ENCODE measurements at regions of chr5 and their contacts with region 1.

Region 1: GRCh38 chr5:140372971-140373487 is 13.0 kb downstream of the SLC4A9 start:
- H3K4me3 ChIP-seq: no peak overlapping the region
- H3K27ac ChIP-seq: no peak overlapping the region
- H3K4me1 ChIP-seq: no peaks in the 10 kb centered on the region
- CTCF ChIP-seq: peak; percentile 80

Region 2: DNA sequence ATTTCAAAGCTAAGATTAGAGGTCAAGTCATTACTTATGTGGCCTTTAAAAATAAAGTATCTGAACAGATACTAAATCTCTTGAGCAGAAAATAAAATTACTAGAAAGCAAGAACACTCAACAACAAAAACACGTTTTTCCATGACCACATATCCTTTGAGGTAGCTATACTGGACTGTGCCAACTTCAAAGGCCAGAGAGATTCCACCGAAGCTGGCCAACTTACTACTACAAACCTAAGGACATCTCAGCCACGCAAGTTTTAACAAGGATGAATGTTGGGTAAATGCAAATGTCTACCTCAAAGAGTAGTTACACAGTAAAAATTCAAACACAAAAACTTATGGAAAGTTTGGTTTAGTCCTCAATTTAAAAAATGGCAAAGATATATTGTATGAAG is 89.0 kb before region 1 on chr5:
- CTCF ChIA-PET with region 1: no interaction called
- POLR2A ChIA-PET with region 1: no interaction called
- H3K4me3 ChIP-seq: no peak overlapping the region
- H3K27ac ChIP-seq: no peak overlapping the region
- H3K4me1 ChIP-seq: 0 out of 2 replicates have a peak, but pooled peaks cover 2% of the 10 kb centered on the region
- CTCF ChIP-seq: no peak

Region 3: DNA sequence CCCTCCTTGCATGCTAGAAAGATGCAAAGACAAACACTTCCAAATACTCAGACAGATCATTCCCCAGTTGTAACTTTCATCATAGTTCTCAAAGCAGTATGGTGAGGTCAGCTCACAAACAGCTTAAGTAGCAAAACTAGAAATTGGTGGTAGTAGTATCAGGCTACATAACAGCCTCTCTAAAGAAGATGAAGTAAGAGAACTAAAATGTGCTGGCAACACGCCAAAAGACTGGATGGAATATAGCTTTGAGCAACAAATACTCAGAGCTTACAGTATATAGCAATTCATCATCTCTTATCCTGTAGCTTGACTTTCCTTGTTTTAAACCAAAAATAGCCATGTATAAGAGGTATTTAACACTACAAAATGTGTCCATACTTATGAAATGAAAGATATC is 77.6 kb before region 1 on chr5:
- CTCF ChIA-PET with region 1: no interaction called
- POLR2A ChIA-PET with region 1: no interaction called
- H3K4me3 ChIP-seq: no peak overlapping the region
- H3K27ac ChIP-seq: no peak overlapping the region
- H3K4me1 ChIP-seq: peaks cover 47% of the 10 kb centered on the region
- CTCF ChIP-seq: no peak

Region 4: GRCh38 chr5:140357726-140358093 is 15.3 kb before region 1 on chr5:
- CTCF ChIA-PET with region 1: interaction called, 32 read pairs
- POLR2A ChIA-PET with region 1: no interaction called
- H3K4me3 ChIP-seq: no peak overlapping the region
- H3K27ac ChIP-seq: no peak overlapping the region
- H3K4me1 ChIP-seq: no peaks in the 10 kb centered on the region
- CTCF ChIP-seq: peak; percentile 89

Region 5: DNA sequence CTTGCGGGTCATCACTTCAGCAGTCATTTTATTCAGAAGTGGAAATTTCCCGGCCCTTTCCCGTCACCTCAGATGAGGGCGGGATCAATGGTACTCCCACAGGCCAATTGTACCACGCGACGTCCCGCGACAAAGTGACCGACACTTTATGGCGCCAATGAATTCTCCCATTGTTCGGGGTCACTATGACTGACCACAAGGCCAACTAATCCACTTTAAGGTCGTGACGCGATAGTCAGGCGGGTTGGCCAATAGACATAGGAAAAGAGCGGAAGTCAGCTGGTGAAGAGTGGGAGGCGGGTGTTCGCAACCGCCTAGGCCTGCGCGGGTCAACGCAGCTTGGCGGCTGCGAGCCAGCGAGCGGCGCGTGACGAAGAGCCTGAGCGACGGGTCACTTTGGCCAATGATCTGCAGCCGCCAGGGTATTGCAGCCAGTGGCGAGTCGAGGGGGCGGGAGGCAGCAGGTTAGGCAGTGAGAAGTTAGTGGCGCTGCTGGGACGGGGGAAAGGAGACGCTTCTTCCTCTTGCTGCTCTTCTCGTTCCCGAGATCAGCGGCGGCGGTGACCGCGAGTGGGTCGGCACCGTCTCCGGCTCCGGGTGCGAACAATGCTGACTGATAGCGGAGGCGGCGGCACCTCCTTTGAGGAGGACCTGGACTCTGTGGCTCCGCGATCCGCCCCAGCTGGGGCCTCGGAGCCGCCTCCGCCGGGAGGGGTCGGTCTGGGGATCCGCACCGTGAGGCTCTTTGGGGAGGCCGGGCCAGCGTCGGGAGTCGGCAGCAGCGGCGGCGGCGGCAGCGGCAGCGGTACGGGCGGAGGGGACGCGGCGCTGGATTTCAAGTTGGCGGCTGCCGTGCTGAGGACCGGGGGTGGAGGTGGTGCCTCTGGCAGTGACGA is 28.6 kb after region 1 on chr5 and contains the start of gene ANKHD1:
- CTCF ChIA-PET with region 1: interaction called, 5 read pairs
- POLR2A ChIA-PET with region 1: interaction called, 10 read pairs
- H3K4me3 ChIP-seq: peak within 1 kb of the TSS; percentile 98
- H3K27ac ChIP-seq: peak within 1 kb of the TSS; percentile 91
- H3K4me1 ChIP-seq: peaks cover 8% of the 10 kb centered on the region; the same call in 1 of the 2 replicates
- CTCF ChIP-seq: peak; percentile 64; the same call in 1 of the 2 replicates

Region 6: DNA sequence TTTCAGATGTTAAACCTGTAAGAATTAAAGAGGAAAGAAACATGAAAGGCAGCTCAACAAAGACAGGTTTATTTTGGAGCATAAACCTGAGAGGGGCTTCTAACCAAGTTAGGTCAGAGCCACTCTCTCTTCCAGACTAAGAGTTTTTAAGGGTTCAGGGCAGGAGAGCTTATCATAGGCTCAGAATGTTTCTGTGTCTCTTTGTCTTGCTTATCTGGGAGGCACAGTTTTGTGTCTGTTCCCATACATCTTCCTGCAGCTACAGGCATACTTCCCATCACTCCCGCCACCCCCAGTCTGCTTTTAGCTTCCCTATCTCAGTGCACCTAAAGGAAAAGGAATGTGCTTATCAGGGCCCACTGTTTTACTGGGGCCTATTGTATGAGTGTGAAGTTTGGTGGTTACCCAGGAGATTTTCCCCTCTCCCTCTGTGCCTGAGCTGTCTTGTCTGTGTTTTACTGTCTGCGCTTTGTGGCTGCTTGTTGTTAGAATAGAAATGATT is 238.0 kb after region 1 on chr5:
- CTCF ChIA-PET with region 1: no interaction called
- POLR2A ChIA-PET with region 1: no interaction called
- H3K4me3 ChIP-seq: no peak overlapping the region
- H3K27ac ChIP-seq: no peak overlapping the region
- H3K4me1 ChIP-seq: no peaks in the 10 kb centered on the region
- CTCF ChIP-seq: no peak

Region 7: DNA sequence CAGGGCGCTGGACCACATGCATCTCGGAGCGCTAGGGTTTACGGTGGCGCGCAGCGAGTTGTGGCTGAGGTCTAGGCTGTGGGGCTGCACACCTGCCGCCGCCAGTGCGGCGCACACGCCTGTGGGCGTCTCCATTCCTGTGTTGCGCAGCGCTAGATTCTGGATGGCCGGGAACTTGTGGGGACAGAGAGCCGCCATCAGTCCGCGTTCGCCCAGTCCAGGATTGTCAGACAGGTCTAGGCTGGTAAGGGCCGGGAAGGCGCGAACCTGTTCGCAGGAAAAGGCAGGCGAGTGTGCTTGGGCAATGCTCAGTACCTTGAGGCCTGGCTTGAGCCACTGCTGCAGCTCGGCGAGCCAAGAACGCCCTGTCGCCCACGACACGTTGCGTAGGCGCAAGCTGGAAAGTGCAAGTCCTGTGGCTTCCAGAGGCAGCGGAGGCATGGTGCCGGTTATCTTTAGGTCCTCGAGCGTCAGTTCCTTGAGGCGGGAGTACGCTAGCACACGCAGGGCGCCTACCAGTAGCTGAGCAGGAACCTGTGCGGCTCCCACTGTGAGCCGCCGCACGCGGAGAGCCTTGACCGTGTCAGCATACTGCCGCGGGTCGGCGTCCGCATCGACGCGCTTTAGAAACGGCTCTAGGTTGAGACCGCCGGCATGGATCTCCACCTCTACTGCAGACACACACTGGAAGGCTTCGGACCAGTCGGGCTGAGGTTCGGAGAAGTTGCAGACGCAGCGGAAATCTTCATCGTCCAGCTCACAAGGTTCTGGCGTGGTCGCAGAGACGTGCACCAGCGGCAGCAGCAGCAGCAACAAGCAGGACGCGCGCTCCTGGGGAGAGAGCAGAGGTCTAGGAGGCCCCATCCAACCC is 259.4 kb after region 1 on chr5:
- CTCF ChIA-PET with region 1: interaction called, 12 read pairs
- POLR2A ChIA-PET with region 1: no interaction called
- H3K4me3 ChIP-seq: no peak overlapping the region
- H3K27ac ChIP-seq: no peak overlapping the region
- H3K4me1 ChIP-seq: no peaks in the 10 kb centered on the region
- CTCF ChIP-seq: no peak

Measured in HEK293 (cell line).